ENCODE measurements at regions of chr2 and their contacts with region 1.

Region 1: GRCh38 chr2:134657637-134658250 is 61.1 kb downstream of the TMEM163 start:
- DNase-seq: peak; percentile 22
- H3K4me3 ChIP-seq: no peak overlapping the region
- H3K27ac ChIP-seq: no peak overlapping the region
- H3K4me1 ChIP-seq: no peaks in the 10 kb centered on the region
- H3K27me3 ChIP-seq: peaks cover 0 to 3% of the 10 kb centered on the region in 2 experiments
- CTCF ChIP-seq: peak; percentile 54 to 59
- POLR2A ChIP-seq: no peak

Region 2: GRCh38 chr2:134436706-134437105 is 221.0 kb before region 1 on chr2:
- CTCF ChIA-PET with region 1: no interaction called
- POLR2A ChIA-PET with region 1: no interaction called
- dilution Hi-C with region 1: no loop called
- intact Hi-C with region 1: no loop called
- DNase-seq: peak; percentile 33
- H3K4me3 ChIP-seq: no peak overlapping the region
- H3K27ac ChIP-seq: peak overlapping the region; percentile 32
- H3K4me1 ChIP-seq: peaks cover 29% of the 10 kb centered on the region
- H3K27me3 ChIP-seq: no peaks in the 10 kb centered on the region
- CTCF ChIP-seq: no peak
- POLR2A ChIP-seq: no peak

Region 3: GRCh38 chr2:134718817-134719814 is 61.4 kb after region 1 on chr2 and contains the start of gene TMEM163:
- CTCF ChIA-PET with region 1: interaction called, 6 read pairs
- POLR2A ChIA-PET with region 1: no interaction called
- dilution Hi-C with region 1: no loop called
- intact Hi-C with region 1: loop called (anchors 5 kb)
- DNase-seq: no peak
- H3K4me3 ChIP-seq: peak within 1 kb of the TSS in 2 of 3 experiments; percentile 24 to 28
- H3K27ac ChIP-seq: no peak within 1 kb of the TSS
- H3K4me1 ChIP-seq: no peaks in the 10 kb centered on the region
- H3K27me3 ChIP-seq: peaks cover 26 to 68% of the 10 kb centered on the region in 2 experiments
- CTCF ChIP-seq: no peak
- POLR2A ChIP-seq: no peak
- total RNA-seq, gene TMEM163: 1.0 and 1.3 TPM in 2 replicates

Measured in endothelial cell of umbilical vein (primary cell).